ENCODE measurements at regions of chr5 and their contacts with region 1.

Region 1: GRCh38 chr5:90873033-90873517 is 314.5 kb downstream of the ADGRV1 start:
- DNase-seq: no peak
- H3K4me3 Mint-ChIP-seq: no peak overlapping the region
- H3K27ac Mint-ChIP-seq: no peak overlapping the region
- H3K4me1 Mint-ChIP-seq: peaks cover 2% of the 10 kb centered on the region
- H3K27me3 Mint-ChIP-seq: peaks cover 37% of the 10 kb centered on the region

Region 2: DNA sequence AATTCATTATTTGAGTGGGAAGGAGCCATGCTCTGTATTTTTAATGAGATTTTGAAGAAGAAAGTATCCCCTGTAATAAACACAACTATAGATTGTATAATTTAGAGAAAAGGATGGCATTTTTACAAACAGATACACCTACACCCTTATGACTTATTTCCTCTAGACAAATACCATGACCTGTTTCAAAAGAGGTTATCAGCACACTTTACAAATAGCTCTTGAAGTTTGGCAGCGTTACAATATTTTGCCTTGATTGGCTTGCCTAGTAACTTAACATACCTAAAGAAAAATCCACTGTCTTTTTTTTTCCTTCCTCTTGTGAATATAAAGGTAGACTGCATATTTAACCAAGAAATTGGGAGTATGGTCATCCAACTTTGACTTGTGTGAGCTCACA is 435.0 kb before region 1 on chr5:
- intact Hi-C with region 1: no loop called
- DNase-seq: no peak
- H3K4me3 Mint-ChIP-seq: no peak overlapping the region
- H3K27ac Mint-ChIP-seq: no peak overlapping the region
- H3K4me1 Mint-ChIP-seq: peaks cover 9% of the 10 kb centered on the region
- H3K27me3 Mint-ChIP-seq: peaks cover 18% of the 10 kb centered on the region

Region 3: GRCh38 chr5:90747175-90747574 is 125.9 kb before region 1 on chr5:
- intact Hi-C with region 1: no loop called
- DNase-seq: no peak
- H3K4me3 Mint-ChIP-seq: no peak overlapping the region
- H3K27ac Mint-ChIP-seq: no peak overlapping the region
- H3K4me1 Mint-ChIP-seq: no peaks in the 10 kb centered on the region
- H3K27me3 Mint-ChIP-seq: no peaks in the 10 kb centered on the region

Region 4: GRCh38 chr5:91280362-91281269 is 407.5 kb after region 1 on chr5:
- intact Hi-C with region 1: loop called (anchors 5 kb)
- DNase-seq: peak; percentile 95
- H3K4me3 Mint-ChIP-seq: peak overlapping the region; percentile 85
- H3K27ac Mint-ChIP-seq: peak overlapping the region; percentile 92
- H3K4me1 Mint-ChIP-seq: peaks cover 28% of the 10 kb centered on the region
- H3K27me3 Mint-ChIP-seq: peaks cover 4% of the 10 kb centered on the region